PC-3 (cell line): ENCODE measurements at regions of chr5 and their contacts with region 1.

Region 1: DNA sequence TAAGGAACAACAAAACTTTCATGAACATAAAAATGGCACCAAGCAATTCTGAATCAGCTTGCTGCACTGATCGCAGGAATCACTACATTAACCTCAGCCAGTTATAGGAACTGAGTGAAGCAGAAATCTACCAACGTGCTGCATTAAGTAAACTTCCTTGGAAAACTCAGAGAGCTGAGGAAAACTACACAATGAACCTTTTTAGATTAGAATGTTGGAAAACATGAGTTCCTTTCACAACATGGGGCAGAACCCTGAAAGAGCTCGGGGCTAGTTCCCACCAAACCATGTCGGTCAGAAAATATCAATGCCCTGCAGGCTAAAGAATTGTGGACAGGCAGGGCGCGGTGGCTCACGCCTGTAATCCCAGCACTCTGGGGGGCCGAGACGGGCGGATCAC is 19.4 kb downstream of the ALDH7A1 start:
- DNase-seq: no peak
- ATAC-seq: no peak
- H3K4me3 ChIP-seq: no peak overlapping the region
- H3K27ac ChIP-seq: no peak overlapping the region
- H3K4me1 ChIP-seq: no peaks in the 10 kb centered on the region
- H3K27me3 ChIP-seq: no peaks in the 10 kb centered on the region
- CTCF ChIP-seq: no peak

Region 2: GRCh38 chr5:126552614-126553013 is 23.0 kb before region 1 on chr5:
- CTCF ChIA-PET with region 1: no interaction called
- POLR2A ChIA-PET with region 1: interaction called, 15 read pairs
- intact Hi-C with region 1: no loop called
- DNase-seq: no peak
- ATAC-seq: no peak
- H3K4me3 ChIP-seq: no peak overlapping the region
- H3K27ac ChIP-seq: no peak overlapping the region
- H3K4me1 ChIP-seq: no peaks in the 10 kb centered on the region
- H3K27me3 ChIP-seq: no peaks in the 10 kb centered on the region
- CTCF ChIP-seq: no peak